ENCODE measurements at regions of chr10 and their contacts with region 1.

Region 1: GRCh38 chr10:91758303-91759146 is 39.7 kb upstream of the TNKS2 start:
- DNase-seq: peak in 7 of 9 donors; percentile 28 to 69 (median 56)
- ATAC-seq: peak; percentile 81
- H3K4me3 ChIP-seq: no peak overlapping the region
- H3K4me3 Mint-ChIP-seq: no peak overlapping the region
- H3K27ac ChIP-seq: no peak overlapping the region
- H3K27ac Mint-ChIP-seq: no peak overlapping the region
- H3K4me1 ChIP-seq: no peaks in the 10 kb centered on the region
- H3K4me1 Mint-ChIP-seq: peaks cover 0 to 11% (median 7%) of the 10 kb centered on the region in 7 donors
- H3K27me3 ChIP-seq: no peaks in the 10 kb centered on the region
- H3K27me3 Mint-ChIP-seq: peaks cover 0 to 56% (median 19%) of the 10 kb centered on the region in 5 donors

Region 2: GRCh38 chr10:91298224-91298871 is 460.2 kb before region 1 on chr10:
- CTCF ChIA-PET with region 1: interaction called, 3 read pairs
- POLR2A ChIA-PET with region 1: no interaction called
- intact Hi-C with region 1: loop called in 1 of 2 experiments (anchors 1 kb)
- DNase-seq: peak; percentile 63 to 84 (median 77)
- ATAC-seq: peak; percentile 96
- H3K4me3 ChIP-seq: peak overlapping the region; percentile 53
- H3K4me3 Mint-ChIP-seq: peak overlapping the region; percentile 67 to 83 (median 74)
- H3K27ac ChIP-seq: no peak overlapping the region
- H3K27ac Mint-ChIP-seq: peak overlapping the region in 4 of 9 donors; percentile 7 to 74 (median 42)
- H3K4me1 ChIP-seq: peaks cover 0 to 4% of the 10 kb centered on the region in 2 donors
- H3K4me1 Mint-ChIP-seq: peaks cover 4 to 11% (median 10%) of the 10 kb centered on the region in 7 donors
- H3K27me3 ChIP-seq: no peaks in the 10 kb centered on the region
- H3K27me3 Mint-ChIP-seq: peaks cover 6 to 16% (median 10%) of the 10 kb centered on the region in 5 donors

Region 3: DNA sequence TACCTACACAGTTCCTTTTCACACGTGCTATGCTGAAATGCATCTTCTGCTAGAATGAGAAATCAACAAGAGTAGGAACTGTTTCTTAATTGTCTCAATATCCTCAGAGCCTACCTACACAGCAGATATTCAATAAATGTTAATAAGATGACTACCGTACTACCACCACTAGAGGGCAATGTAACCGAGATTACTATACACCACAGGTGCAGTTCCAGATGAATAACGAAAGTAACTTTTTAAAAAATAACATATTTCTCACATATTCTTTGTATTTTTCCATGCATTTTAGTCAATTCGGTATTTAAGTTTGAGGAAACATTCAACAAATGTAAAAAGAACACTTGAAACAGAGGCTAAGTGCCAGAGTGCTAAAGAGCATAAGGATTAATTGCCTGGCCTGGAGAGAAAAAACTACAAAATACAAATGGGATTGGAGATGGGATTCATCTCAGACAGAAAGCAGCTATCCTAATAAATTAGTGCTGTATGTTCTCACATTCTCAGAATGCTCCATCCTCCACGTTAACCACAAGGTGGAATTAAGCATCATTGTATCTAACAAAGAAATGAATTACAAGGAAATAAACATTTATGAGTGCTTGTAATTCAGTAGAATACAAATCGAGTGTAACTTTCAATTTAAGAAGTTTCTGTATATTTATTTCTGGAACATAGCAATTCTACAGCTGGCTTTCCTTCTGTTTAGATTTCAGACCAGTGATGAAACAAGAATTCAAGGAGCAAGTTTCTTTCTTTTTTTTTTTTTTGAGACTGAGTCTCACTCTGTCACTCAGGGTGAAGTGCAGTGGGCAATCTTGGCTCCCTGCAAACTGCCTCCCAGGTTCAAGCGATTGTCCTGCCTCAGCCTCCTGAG is 368.7 kb before region 1 on chr10:
- CTCF ChIA-PET with region 1: interaction called, 3 read pairs
- POLR2A ChIA-PET with region 1: no interaction called
- intact Hi-C with region 1: loop called in 1 of 2 experiments (anchors 5 kb)
- DNase-seq: peak in 7 of 9 donors; percentile 51 to 76 (median 68)
- ATAC-seq: peak; percentile 98
- H3K4me3 ChIP-seq: no peak overlapping the region
- H3K4me3 Mint-ChIP-seq: peak overlapping the region in 6 of 10 donors; percentile 4 to 67 (median 38)
- H3K27ac ChIP-seq: no peak overlapping the region
- H3K27ac Mint-ChIP-seq: peak overlapping the region in 1 of 9 donors; percentile 30
- H3K4me1 ChIP-seq: no peaks in the 10 kb centered on the region
- H3K4me1 Mint-ChIP-seq: peaks cover 0 to 11% (median 6%) of the 10 kb centered on the region in 7 donors
- H3K27me3 ChIP-seq: no peaks in the 10 kb centered on the region
- H3K27me3 Mint-ChIP-seq: peaks cover 12 to 34% (median 20%) of the 10 kb centered on the region in 5 donors

Region 4: DNA sequence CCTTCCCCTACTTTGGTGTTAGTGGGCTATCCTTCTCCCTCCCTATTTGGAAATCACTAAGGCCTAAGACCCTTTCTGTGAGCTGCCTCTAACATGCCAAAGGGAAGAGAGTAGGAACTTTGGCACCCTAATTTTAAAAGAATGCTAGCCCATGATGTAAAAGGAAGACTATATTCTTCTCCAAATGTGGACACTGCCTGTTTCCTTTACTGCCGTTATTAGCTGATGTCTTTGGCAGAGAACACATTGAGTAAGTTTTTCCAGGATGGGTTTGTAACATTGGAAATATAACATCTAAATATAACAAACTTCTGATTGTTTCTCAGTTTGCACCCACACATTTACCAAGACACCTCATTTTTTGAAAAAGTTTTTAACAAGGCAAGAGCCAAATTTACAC is 17.2 kb before region 1 on chr10:
- CTCF ChIA-PET with region 1: no interaction called
- POLR2A ChIA-PET with region 1: no interaction called
- intact Hi-C with region 1: no loop called
- DNase-seq: no peak
- ATAC-seq: no peak
- H3K4me3 ChIP-seq: no peak overlapping the region
- H3K4me3 Mint-ChIP-seq: no peak overlapping the region
- H3K27ac ChIP-seq: no peak overlapping the region
- H3K27ac Mint-ChIP-seq: no peak overlapping the region
- H3K4me1 ChIP-seq: no peaks in the 10 kb centered on the region
- H3K4me1 Mint-ChIP-seq: no peaks in the 10 kb centered on the region
- H3K27me3 ChIP-seq: no peaks in the 10 kb centered on the region
- H3K27me3 Mint-ChIP-seq: peaks cover 54 to 80% (median 62%) of the 10 kb centered on the region in 5 donors

Region 5: GRCh38 chr10:91820144-91820543 is 61.6 kb after region 1 on chr10:
- CTCF ChIA-PET with region 1: no interaction called
- POLR2A ChIA-PET with region 1: no interaction called
- intact Hi-C with region 1: loop called in 1 of 2 experiments (anchors 2 kb)
- DNase-seq: no peak
- ATAC-seq: no peak
- H3K4me3 ChIP-seq: no peak overlapping the region
- H3K4me3 Mint-ChIP-seq: no peak overlapping the region
- H3K27ac ChIP-seq: no peak overlapping the region
- H3K27ac Mint-ChIP-seq: peak overlapping the region in 2 of 9 donors; percentile 30 to 65
- H3K4me1 ChIP-seq: no peaks in the 10 kb centered on the region
- H3K4me1 Mint-ChIP-seq: peaks cover 0 to 10% (median 3%) of the 10 kb centered on the region in 7 donors
- H3K27me3 ChIP-seq: no peaks in the 10 kb centered on the region
- H3K27me3 Mint-ChIP-seq: no peaks in the 10 kb centered on the region

Region 6: GRCh38 chr10:91838199-91838598 is 79.7 kb after region 1 on chr10:
- CTCF ChIA-PET with region 1: interaction called, 4 read pairs
- POLR2A ChIA-PET with region 1: no interaction called
- intact Hi-C with region 1: loop called in 1 of 2 experiments (anchors 5 kb)
- DNase-seq: no peak
- ATAC-seq: no peak
- H3K4me3 ChIP-seq: no peak overlapping the region
- H3K4me3 Mint-ChIP-seq: no peak overlapping the region
- H3K27ac ChIP-seq: no peak overlapping the region
- H3K27ac Mint-ChIP-seq: no peak overlapping the region
- H3K4me1 ChIP-seq: no peaks in the 10 kb centered on the region
- H3K4me1 Mint-ChIP-seq: no peaks in the 10 kb centered on the region
- H3K27me3 ChIP-seq: no peaks in the 10 kb centered on the region
- H3K27me3 Mint-ChIP-seq: no peaks in the 10 kb centered on the region

Region 7: GRCh38 chr10:91856637-91857036 is 98.1 kb after region 1 on chr10:
- CTCF ChIA-PET with region 1: no interaction called
- POLR2A ChIA-PET with region 1: no interaction called
- intact Hi-C with region 1: loop called in 1 of 2 experiments (anchors 2 kb)
- DNase-seq: no peak
- ATAC-seq: no peak
- H3K4me3 ChIP-seq: no peak overlapping the region
- H3K4me3 Mint-ChIP-seq: no peak overlapping the region
- H3K27ac ChIP-seq: no peak overlapping the region
- H3K27ac Mint-ChIP-seq: peak overlapping the region in 1 of 9 donors; percentile 7
- H3K4me1 ChIP-seq: no peaks in the 10 kb centered on the region
- H3K4me1 Mint-ChIP-seq: peaks cover 0 to 2% (median 0%) of the 10 kb centered on the region in 7 donors
- H3K27me3 ChIP-seq: no peaks in the 10 kb centered on the region
- H3K27me3 Mint-ChIP-seq: no peaks in the 10 kb centered on the region

Region 8: GRCh38 chr10:92113911-92114600 is 355.5 kb after region 1 on chr10:
- CTCF ChIA-PET with region 1: no interaction called
- POLR2A ChIA-PET with region 1: no interaction called
- intact Hi-C with region 1: no loop called
- DNase-seq: no peak
- ATAC-seq: no peak
- H3K4me3 ChIP-seq: no peak overlapping the region
- H3K4me3 Mint-ChIP-seq: no peak overlapping the region
- H3K27ac ChIP-seq: no peak overlapping the region
- H3K27ac Mint-ChIP-seq: no peak overlapping the region
- H3K4me1 ChIP-seq: no peaks in the 10 kb centered on the region
- H3K4me1 Mint-ChIP-seq: no peaks in the 10 kb centered on the region
- H3K27me3 ChIP-seq: no peaks in the 10 kb centered on the region
- H3K27me3 Mint-ChIP-seq: no peaks in the 10 kb centered on the region

Region 9: GRCh38 chr10:92432596-92432995 is 674.1 kb after region 1 on chr10:
- CTCF ChIA-PET with region 1: no interaction called
- POLR2A ChIA-PET with region 1: no interaction called
- intact Hi-C with region 1: loop called in 1 of 2 experiments (anchors 2 kb)
- DNase-seq: no peak
- ATAC-seq: no peak
- H3K4me3 ChIP-seq: no peak overlapping the region
- H3K4me3 Mint-ChIP-seq: no peak overlapping the region
- H3K27ac ChIP-seq: no peak overlapping the region
- H3K27ac Mint-ChIP-seq: no peak overlapping the region
- H3K4me1 ChIP-seq: no peaks in the 10 kb centered on the region
- H3K4me1 Mint-ChIP-seq: no peaks in the 10 kb centered on the region
- H3K27me3 ChIP-seq: no peaks in the 10 kb centered on the region
- H3K27me3 Mint-ChIP-seq: no peaks in the 10 kb centered on the region